HepG2 (cell line): ENCODE measurements at regions of chr1 and their contacts with region 1.

Region 1: DNA sequence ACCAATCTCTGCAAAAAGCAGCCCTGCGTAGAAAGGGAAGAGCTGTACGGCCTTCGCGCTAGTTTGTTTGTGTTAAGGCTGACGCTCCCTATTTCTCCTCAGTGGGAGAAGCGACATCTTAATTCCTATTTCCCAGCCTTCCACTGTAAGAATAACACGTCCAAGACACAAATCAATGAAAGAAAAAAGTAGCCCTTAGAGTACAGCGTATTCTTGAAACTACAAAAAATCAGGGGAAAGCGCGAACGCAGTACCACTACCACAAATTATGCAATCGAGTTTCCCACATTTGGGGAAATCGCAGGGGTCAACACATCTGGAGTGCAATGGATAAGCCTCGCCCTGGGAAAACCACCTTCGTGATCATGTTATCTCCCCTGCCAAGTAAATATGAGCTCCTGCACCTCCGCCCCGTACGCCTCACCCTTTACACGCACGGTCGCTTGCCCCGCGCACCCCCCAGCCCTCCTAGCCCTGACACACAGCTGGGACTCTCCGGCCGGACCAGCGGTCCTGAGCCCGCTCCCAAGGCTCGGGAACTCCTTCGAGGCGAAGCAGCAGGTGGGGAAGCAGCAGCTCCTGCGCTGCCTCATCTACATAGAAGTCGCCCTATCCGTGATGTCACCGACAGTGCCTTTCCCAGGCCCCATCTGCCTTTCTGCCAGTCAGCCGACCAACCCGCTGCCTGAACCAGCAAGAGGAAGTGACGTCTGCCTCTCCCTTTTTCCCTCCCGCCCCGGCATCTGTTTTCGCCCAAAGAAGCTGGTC is 94.7 kb downstream of the PPIAL4G start:
- DNase-seq: peak; percentile 80
- ATAC-seq: peak; percentile 86
- H3K4me3 ChIP-seq: peak overlapping the region; percentile 50 to 65 (median 57)
- H3K27ac ChIP-seq: peak overlapping the region; percentile 68
- H3K4me1 ChIP-seq: peaks cover 40% of the 10 kb centered on the region
- H3K27me3 ChIP-seq: no peaks in the 10 kb centered on the region
- CTCF ChIP-seq: no peak
- EP300 ChIP-seq: no peak
- POLR2A ChIP-seq: peak; percentile 74 to 97
- RAD21 ChIP-seq: no peak

Region 2: GRCh38 chr1:148435406-148435805 is 47.0 kb after region 1 on chr1:
- CTCF ChIA-PET with region 1: no interaction called
- POLR2A ChIA-PET with region 1: interaction called, 8 read pairs
- in situ Hi-C with region 1: loop called (anchors 10 kb)
- intact Hi-C with region 1: no loop called
- DNase-seq: no peak
- ATAC-seq: no peak
- H3K4me3 ChIP-seq: no peak overlapping the region
- H3K27ac ChIP-seq: no peak overlapping the region
- H3K4me1 ChIP-seq: peaks cover 2% of the 10 kb centered on the region
- H3K27me3 ChIP-seq: no peaks in the 10 kb centered on the region
- CTCF ChIP-seq: no peak
- EP300 ChIP-seq: no peak
- POLR2A ChIP-seq: no peak
- RAD21 ChIP-seq: no peak